Activated B cell treated with CpG ODN at 0.5 μM for 24 hours (primary cell): ENCODE measurements at regions of chr13 and their contacts with region 1.

Region 1: GRCh38 chr13:24053519-24054251 is 106.8 kb upstream of the SPATA13 start:
- DNase-seq: peak; percentile 18
- ATAC-seq: peak; percentile 92
- H3K4me3 Mint-ChIP-seq: no peak overlapping the region
- H3K27ac Mint-ChIP-seq: no peak overlapping the region
- H3K4me1 Mint-ChIP-seq: peaks cover 9% of the 10 kb centered on the region
- H3K27me3 Mint-ChIP-seq: peaks cover 9% of the 10 kb centered on the region
- CTCF ChIP-seq: no peak

Region 2: DNA sequence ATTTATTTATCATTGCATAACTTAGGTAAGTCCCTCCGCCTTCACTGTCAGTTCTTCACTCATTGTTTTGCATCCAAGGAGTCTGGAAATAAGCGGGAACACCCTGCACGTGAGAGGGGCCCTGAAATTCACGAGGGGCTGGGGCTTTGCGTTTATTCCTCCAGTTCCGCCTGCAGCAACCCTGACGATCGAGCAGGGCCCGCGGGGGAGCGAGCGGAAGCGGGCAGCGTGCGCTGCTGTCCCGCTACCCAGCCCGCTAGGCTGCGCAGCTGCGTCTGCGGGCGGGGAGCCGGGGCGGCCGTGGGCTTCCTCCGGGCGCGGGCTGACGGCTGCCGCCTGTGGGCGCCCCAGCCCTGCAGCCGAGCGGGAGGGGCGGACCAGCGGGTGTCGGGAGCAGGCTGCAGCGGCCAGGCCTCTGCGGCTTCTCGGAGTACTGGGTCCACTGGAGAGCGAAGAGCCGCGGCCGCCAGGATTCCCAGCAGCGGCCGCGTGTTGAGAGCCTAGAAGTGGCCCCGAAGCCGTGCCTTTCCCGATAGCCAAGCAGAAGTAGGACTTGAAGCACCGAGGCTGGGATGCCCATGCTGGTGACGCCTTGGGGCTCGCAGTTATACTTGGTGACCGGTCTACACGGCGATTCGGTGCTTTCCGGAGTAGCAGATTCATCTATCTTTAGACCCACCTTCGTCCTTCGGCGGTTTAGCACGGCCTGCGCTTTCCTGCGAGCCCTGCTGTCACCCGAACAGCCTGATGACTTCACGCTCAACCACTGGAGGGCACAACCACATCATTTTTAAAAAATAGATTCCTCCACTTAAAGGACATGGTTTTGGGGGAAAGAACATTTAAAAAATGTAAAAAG is 587.3 kb before region 1 on chr13:
- CTCF ChIA-PET with region 1: no interaction called
- POLR2A ChIA-PET with region 1: no interaction called
- intact Hi-C with region 1: loop called (anchors 10 kb)
- DNase-seq: peak; percentile 51
- ATAC-seq: peak; percentile 88
- H3K4me3 Mint-ChIP-seq: peak overlapping the region; percentile 79
- H3K27ac Mint-ChIP-seq: no peak overlapping the region
- H3K4me1 Mint-ChIP-seq: peaks cover 8% of the 10 kb centered on the region
- H3K27me3 Mint-ChIP-seq: peaks cover 19% of the 10 kb centered on the region
- CTCF ChIP-seq: no peak

Region 3: GRCh38 chr13:24020375-24020830 is 33.3 kb before region 1 on chr13:
- CTCF ChIA-PET with region 1: interaction called, 10 read pairs
- POLR2A ChIA-PET with region 1: no interaction called
- intact Hi-C with region 1: no loop called
- DNase-seq: no peak
- ATAC-seq: no peak
- H3K4me3 Mint-ChIP-seq: no peak overlapping the region
- H3K27ac Mint-ChIP-seq: no peak overlapping the region
- H3K4me1 Mint-ChIP-seq: no peaks in the 10 kb centered on the region
- H3K27me3 Mint-ChIP-seq: no peaks in the 10 kb centered on the region
- CTCF ChIP-seq: no peak

Region 4: GRCh38 chr13:24160454-24161009 is 106.8 kb after region 1 on chr13 and contains the start of gene SPATA13:
- CTCF ChIA-PET with region 1: no interaction called
- POLR2A ChIA-PET with region 1: no interaction called
- intact Hi-C with region 1: loop called (anchors 1 kb)
- DNase-seq: peak; percentile 86
- ATAC-seq: peak; percentile 98
- H3K4me3 Mint-ChIP-seq: peak within 1 kb of the TSS; percentile 83
- H3K27ac Mint-ChIP-seq: no peak within 1 kb of the TSS
- H3K4me1 Mint-ChIP-seq: peaks cover 18% of the 10 kb centered on the region
- H3K27me3 Mint-ChIP-seq: peaks cover 11% of the 10 kb centered on the region
- CTCF ChIP-seq: no peak
- total RNA-seq, gene SPATA13: 10.6 and 11.8 TPM in 2 replicates

Region 5: GRCh38 chr13:24220086-24220703 is 166.5 kb after region 1 on chr13:
- CTCF ChIA-PET with region 1: interaction called, 56 read pairs
- POLR2A ChIA-PET with region 1: no interaction called
- intact Hi-C with region 1: loop called (anchors 1 kb)
- DNase-seq: no peak
- ATAC-seq: peak; percentile 61
- H3K4me3 Mint-ChIP-seq: no peak overlapping the region
- H3K27ac Mint-ChIP-seq: no peak overlapping the region
- H3K4me1 Mint-ChIP-seq: peaks cover 53% of the 10 kb centered on the region
- H3K27me3 Mint-ChIP-seq: no peaks in the 10 kb centered on the region
- CTCF ChIP-seq: no peak

Region 6: DNA sequence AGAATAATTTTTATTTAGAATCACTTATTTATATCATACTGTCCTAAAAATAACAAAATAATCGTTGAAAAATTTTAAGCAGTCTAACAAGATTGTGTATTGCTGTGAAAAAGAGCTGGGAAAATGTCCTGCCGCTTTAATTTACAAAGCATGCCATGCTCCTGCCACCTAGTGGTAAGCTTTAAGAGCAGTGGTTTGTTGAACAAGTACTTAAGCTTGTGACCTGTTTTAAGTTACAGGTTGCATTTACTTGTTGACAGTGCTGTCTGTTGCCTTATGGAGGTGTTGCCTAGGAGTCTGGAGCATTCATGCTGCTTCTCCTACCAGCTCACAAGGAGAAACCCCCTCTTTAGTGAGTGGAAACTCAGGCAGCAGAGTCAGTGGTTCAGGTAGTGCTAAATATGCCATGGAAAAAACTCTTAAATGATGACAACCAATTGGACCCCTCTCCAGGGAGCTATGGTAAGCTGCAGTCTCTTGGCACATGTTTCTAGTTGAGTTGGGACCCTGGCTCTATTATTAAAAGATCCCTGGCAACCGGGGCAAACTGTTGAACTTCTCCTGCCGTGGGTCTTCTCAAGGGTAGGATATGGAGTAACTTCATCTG is 175.3 kb after region 1 on chr13:
- CTCF ChIA-PET with region 1: interaction called, 30 read pairs
- POLR2A ChIA-PET with region 1: no interaction called
- intact Hi-C with region 1: no loop called
- DNase-seq: no peak
- ATAC-seq: peak; percentile 58
- H3K4me3 Mint-ChIP-seq: no peak overlapping the region
- H3K27ac Mint-ChIP-seq: no peak overlapping the region
- H3K4me1 Mint-ChIP-seq: peaks cover 27% of the 10 kb centered on the region
- H3K27me3 Mint-ChIP-seq: no peaks in the 10 kb centered on the region
- CTCF ChIP-seq: peak; percentile 99